ENCODE measurements at regions of chr11 and their contacts with region 1.

Region 1: DNA sequence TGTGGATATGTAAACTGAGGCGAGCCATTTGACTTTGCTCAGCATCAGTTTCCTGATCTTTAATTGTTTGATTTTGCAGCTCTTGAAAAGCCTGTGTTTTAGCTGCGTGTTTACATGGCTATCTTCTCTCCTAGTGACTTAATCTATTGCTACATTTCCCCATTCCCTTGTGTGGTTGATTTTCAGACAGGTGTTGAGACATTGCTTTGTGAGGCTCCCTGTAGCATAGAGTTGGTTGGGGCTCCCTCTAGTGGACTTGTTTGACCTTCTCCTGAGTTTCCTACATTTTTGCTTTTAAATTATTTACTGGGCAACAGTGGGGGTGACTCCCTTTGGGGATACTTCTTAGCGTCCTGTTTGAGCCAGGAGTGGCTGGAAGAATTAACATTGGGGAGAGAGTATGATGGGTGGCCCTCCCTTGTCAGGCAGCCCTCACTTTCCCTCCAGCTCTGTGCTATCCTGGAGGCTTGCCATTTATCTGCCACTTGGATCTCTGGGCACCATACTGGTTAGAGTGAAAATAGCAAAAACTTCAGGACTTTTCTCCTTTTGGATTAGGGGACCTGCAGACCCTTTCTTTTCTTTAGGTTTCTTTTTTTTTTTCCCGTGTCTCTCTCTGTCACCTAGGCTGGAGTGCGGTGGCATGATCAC is 9.2 kb upstream of the CBL start:
- DNase-seq: peak; percentile 50 to 66
- ATAC-seq: peak; percentile 99
- H3K4me3 ChIP-seq: no peak overlapping the region
- H3K27ac ChIP-seq: no peak overlapping the region
- H3K4me1 ChIP-seq: no peaks in the 10 kb centered on the region
- H3K27me3 ChIP-seq: no peaks in the 10 kb centered on the region
- CTCF ChIP-seq: peak; percentile 75 to 85 (median 80)
- POLR2A ChIP-seq: no peak

Region 2: DNA sequence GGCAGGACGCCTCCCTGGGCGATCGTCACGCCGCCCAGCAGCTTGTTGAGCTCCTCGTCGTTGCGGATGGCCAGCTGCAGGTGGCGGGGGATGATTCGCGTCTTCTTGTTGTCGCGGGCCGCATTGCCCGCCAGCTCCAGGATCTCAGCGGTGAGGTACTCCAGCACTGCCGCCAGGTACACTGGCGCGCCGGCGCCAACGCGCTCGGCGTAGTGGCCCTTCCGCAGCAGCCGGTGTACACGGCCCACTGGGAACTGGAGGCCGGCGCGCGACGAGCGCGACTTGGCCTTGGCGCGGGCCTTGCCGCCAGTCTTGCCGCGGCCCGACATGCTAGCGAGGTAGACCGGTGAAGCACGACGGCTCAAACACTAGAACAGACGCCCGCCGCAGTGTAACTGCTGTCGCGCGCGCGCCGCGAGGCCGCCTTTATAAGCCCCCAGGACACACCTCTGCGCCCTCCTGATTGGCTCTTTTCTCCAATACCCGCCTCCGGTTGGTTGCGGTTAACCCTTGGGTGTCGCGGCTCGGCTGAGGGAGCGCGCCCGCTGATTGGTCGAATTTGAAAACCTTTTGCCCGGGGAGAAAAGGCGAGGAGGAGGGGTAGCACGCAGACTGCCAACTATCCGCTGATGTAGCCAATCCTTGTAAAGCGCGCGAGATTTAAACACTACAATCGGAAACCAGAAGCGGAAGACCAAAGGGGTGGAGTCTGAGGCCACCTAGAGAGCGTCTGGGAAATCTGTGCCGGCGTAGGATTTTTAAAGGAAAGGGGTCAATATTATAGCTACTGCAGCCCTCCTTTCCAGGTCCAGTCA is 101.7 kb before region 1 on chr11:
- in situ Hi-C with region 1: loop called in 1 of 4 experiments (anchors 5 kb)
- intact Hi-C with region 1: loop called (anchors 1 kb)
- DNase-seq: peak; percentile 99 to 100
- ATAC-seq: peak; percentile 94
- H3K4me3 ChIP-seq: peak overlapping the region; percentile 69 to 99 (median 88)
- H3K27ac ChIP-seq: peak overlapping the region; percentile 91 to 98 (median 94)
- H3K4me1 ChIP-seq: peaks cover 17 to 24% of the 10 kb centered on the region in 2 donors
- H3K27me3 ChIP-seq: no peaks in the 10 kb centered on the region
- CTCF ChIP-seq: peak in 4 of 5 experiments; percentile 18 to 70 (median 35)
- POLR2A ChIP-seq: peak; percentile 99 to 100

Region 3: DNA sequence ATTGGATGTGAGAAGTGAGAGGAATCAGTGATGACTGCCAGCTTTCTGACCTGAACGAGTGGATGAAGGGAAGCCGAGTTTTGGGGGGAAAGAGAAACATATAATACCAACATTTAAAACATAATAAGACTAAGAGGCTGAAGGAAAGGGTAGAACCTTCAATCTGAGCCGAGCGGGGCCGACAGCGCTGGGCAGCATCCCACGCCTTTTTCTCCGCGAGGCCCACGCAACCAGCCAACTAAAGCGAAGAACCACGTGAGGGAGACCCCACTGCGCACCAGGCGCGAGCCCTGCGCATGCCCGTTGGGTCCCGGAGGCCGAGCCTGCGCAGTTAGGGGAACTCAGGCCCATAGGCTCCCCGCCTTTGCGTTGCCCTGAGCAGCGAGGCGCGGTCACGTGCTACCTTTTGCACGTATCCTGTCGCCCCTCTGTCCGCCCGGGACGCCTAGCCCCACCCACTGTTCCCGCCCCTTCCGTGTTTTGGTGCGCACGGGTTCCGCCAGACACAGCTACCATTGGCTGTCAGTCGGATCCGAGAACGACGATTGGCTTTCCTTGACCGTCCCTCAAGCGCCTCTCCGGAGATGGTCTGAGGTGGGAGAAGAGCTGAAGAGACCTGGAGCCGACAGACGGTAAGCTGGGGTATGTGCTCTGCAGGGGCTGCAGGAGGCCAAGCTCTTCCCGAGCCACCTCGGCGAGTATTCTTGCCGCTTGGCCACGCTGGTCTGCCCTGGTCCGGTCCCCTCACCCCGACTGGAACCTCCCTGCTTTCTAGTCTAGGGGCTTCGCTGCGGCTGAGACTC is 75.7 kb before region 1 on chr11 and contains the start of gene HINFP:
- in situ Hi-C with region 1: no loop called
- intact Hi-C with region 1: loop called (anchors 5 kb)
- DNase-seq: peak; percentile 100
- ATAC-seq: peak; percentile 99 to 100
- H3K4me3 ChIP-seq: peak within 1 kb of the TSS; percentile 67 to 97 (median 87)
- H3K27ac ChIP-seq: peak within 1 kb of the TSS; percentile 85 to 90 (median 88)
- H3K4me1 ChIP-seq: peaks cover 16 to 20% of the 10 kb centered on the region in 2 donors
- H3K27me3 ChIP-seq: no peaks in the 10 kb centered on the region
- CTCF ChIP-seq: no peak
- POLR2A ChIP-seq: peak; percentile 63 to 76
- total RNA-seq, gene HINFP: 8.1 to 17.8 (median 15.3) TPM

Region 4: GRCh38 chr11:119155733-119156492 is 41.0 kb before region 1 on chr11:
- in situ Hi-C with region 1: no loop called
- intact Hi-C with region 1: no loop called
- DNase-seq: no peak
- ATAC-seq: no peak
- H3K4me3 ChIP-seq: no peak overlapping the region
- H3K27ac ChIP-seq: no peak overlapping the region
- H3K4me1 ChIP-seq: no peaks in the 10 kb centered on the region
- H3K27me3 ChIP-seq: no peaks in the 10 kb centered on the region
- CTCF ChIP-seq: no peak
- POLR2A ChIP-seq: no peak

Region 5: GRCh38 chr11:119168471-119169281 is 28.3 kb before region 1 on chr11 and contains the start of gene NLRX1:
- in situ Hi-C with region 1: no loop called
- intact Hi-C with region 1: loop called (anchors 1 kb)
- DNase-seq: peak; percentile 70 to 82
- ATAC-seq: peak; percentile 92 to 95
- H3K4me3 ChIP-seq: peak within 1 kb of the TSS; percentile 71 to 91 (median 80)
- H3K27ac ChIP-seq: peak within 1 kb of the TSS; percentile 82 to 95 (median 92)
- H3K4me1 ChIP-seq: peaks cover 8 to 10% of the 10 kb centered on the region in 2 donors
- H3K27me3 ChIP-seq: no peaks in the 10 kb centered on the region
- CTCF ChIP-seq: peak; percentile 74 to 92 (median 90)
- POLR2A ChIP-seq: peak; percentile 30 to 62
- total RNA-seq, gene NLRX1: 12.2 to 21.3 (median 16.4) TPM

Region 6: GRCh38 chr11:119236490-119236889 is 39.5 kb after region 1 on chr11:
- in situ Hi-C with region 1: no loop called
- intact Hi-C with region 1: no loop called
- DNase-seq: no peak
- ATAC-seq: no peak
- H3K4me3 ChIP-seq: no peak overlapping the region
- H3K27ac ChIP-seq: no peak overlapping the region
- H3K4me1 ChIP-seq: peaks cover 0 to 5% of the 10 kb centered on the region in 2 donors
- H3K27me3 ChIP-seq: no peaks in the 10 kb centered on the region
- CTCF ChIP-seq: no peak
- POLR2A ChIP-seq: no peak

Region 7: DNA sequence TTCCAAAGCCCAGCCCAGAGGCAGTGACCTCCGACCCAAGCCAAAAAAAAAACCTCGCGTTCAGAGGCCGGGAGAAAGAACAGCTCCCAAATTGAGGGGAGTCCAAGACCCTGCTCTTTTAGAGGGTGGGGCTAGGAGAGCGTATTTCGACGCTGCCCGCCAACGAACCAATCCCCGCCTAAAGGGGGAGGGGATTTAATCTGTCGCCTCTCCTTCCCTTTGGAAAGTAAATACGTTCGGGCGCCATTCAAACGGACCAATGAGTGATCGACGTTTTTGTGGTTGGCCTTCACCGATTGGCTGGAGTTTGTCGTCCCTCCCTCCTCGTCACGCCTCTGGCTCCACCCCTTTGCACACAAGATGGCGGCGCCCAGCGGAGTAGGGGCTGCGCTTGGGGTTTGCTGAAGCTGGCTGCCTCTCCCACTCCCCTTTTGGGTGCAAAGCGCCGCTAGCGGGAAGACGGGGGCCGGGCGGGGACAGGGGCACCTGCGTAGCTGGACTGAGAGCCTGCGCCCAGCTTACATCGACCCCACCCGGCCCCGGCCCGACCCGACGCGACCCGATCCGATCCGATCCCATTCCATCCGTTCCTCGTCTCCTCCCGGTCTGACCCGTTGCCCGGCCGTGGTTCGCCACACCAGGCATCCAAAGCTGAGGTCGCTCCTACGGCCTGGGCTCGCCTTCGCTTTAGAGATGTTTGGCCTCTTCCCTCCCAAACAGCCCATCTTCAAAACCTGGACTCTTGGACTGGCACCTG is 137.4 kb after region 1 on chr11 and contains the start of gene RNF26:
- in situ Hi-C with region 1: loop called (anchors 5 to 10 kb)
- intact Hi-C with region 1: no loop called
- DNase-seq: peak; percentile 98
- ATAC-seq: peak; percentile 97 to 98
- H3K4me3 ChIP-seq: peak within 1 kb of the TSS; percentile 80 to 99 (median 93)
- H3K27ac ChIP-seq: peak within 1 kb of the TSS; percentile 91 to 98 (median 96)
- H3K4me1 ChIP-seq: peaks cover 32 to 38% of the 10 kb centered on the region in 2 donors
- H3K27me3 ChIP-seq: no peaks in the 10 kb centered on the region
- CTCF ChIP-seq: no peak
- POLR2A ChIP-seq: peak; percentile 85 to 86
- total RNA-seq, gene RNF26: 3.8 to 5.1 (median 4.7) TPM